ENCODE measurements at regions of chr1 and their contacts with region 1.

Region 1: GRCh38 chr1:163174524-163175437 is 27.9 kb downstream of the RGS5 start:
- DNase-seq: peak; percentile 83
- H3K4me3 ChIP-seq: peak overlapping the region; percentile 54
- H3K27ac ChIP-seq: no peak overlapping the region
- H3K4me1 ChIP-seq: peaks cover 46% of the 10 kb centered on the region
- H3K27me3 ChIP-seq: no peaks in the 10 kb centered on the region

Region 2: GRCh38 chr1:162873671-162874666 is 300.8 kb before region 1 on chr1:
- in situ Hi-C with region 1: loop called (anchors 5 kb)
- DNase-seq: peak; percentile 79
- H3K4me3 ChIP-seq: no peak overlapping the region
- H3K27ac ChIP-seq: peak overlapping the region; percentile 62
- H3K4me1 ChIP-seq: peaks cover 19% of the 10 kb centered on the region
- H3K27me3 ChIP-seq: no peaks in the 10 kb centered on the region

Region 3: DNA sequence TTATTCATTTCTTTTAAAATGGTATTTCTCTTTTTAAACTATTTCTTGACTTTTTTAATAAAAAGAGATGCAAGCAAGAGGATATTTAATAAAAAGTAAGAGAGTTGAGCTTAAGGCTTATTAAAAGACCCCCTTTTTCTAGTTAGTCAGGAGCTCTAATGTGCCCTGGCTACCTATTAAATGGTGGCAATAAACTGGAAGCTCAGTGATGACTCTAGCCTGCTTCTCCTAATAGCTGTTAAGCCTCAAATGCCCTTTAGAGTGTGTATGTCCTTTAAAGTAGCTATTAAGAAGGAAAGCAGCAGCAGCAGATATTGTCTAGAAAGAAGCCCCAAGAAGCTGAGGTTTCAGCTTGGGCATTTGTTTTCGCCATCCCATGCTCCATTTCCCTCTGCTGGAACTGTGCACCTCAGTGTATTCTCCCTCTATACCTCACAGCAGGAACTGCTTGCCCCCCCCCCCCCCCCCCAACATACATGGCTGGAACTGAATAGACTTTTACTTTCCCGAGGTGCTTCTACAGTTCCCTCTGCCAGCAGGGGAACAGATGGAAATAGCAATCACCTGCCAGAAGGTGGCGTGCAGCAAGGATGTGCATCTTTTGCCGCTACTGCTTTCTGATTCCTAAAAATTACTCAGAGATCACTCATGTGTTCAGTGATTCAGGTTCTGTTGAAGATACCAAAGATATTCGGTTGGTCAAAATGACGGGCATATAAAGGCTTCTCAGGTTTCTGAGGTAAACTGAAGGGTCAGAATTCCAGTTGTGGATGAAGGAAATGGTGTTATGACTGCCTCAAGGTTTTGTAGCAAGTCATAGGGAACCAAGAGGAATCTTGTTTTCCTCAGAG is 103.2 kb before region 1 on chr1:
- in situ Hi-C with region 1: loop called (anchors 5 kb)
- DNase-seq: peak; percentile 93
- H3K4me3 ChIP-seq: peak overlapping the region; percentile 82
- H3K27ac ChIP-seq: peak overlapping the region; percentile 20
- H3K4me1 ChIP-seq: peaks cover 32% of the 10 kb centered on the region
- H3K27me3 ChIP-seq: no peaks in the 10 kb centered on the region